Right ventricle myocardium superior (tissue), 1 donor: ENCODE measurements at regions of chr4 and their contacts with region 1.

Region 1: DNA sequence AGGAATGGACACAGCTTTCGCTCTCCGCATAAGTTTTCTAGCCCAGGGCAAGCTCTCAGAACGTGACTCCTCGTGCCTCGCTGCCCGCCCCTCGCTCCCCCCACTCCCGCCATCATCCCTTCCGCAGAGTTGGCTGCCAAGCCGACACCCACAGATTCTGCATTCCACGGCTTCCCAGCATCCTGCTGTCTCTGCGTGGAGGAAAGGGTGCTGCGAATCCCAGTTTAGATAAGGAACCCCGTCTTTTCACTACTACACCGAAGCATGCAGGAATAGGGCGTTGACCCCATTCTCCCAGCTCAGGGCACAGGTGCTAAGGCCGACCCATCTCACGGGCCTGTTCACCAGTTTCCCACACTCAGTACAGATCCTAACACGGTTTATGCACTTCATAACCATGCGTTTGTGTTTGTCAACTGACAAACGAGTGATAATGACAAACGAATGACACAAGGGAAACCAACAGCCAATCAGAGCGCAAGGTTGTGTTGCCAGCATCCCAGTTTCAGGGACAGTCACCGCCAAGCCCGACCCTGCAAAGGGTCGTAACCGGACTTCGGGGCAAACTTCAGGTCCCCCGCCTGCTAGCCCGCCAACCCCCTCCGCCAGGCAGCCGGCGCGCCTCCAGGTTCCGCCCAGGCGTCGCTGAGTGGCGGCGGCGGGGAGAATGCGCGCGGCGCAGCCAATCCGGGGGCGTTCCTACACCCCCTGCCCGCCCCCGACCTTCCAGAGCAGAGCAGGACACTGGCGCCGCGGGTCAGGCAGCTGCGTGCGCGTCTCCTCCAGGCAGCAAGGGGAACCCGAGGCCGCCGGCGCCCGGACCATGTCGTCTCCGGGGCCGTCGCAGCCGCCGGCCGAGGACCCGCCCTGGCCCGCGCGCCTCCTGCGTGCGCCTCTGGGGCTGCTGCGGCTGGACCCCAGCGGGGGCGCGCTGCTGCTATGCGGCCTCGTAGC is at the start of gene CYP2U1:
- DNase-seq: peak; percentile 94
- ATAC-seq: peak; percentile 99
- total RNA-seq, gene CYP2U1: 6.5 TPM

Region 2: GRCh38 chr4:107548211-107548905 is 382.7 kb before region 1 on chr4:
- intact Hi-C with region 1: no loop called
- DNase-seq: no peak
- ATAC-seq: no peak

Region 3: DNA sequence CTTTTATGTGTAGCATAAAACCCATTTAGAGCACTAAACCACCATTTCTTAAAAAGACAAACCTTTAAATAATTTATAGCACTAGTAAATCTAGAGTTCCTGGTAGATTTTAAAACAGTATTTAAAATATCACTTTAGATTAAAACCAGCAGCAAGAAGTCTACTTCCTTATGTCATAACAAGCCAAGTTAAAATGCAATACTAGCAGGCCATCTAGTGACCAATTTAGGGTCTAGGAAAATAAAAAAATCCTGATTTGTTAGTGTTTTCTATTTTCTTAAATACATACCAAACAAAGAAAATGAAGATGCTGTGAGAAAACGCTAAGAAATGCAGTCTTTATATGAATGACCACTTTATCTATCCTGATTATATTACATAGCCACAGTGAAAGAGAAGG is 265.0 kb before region 1 on chr4:
- intact Hi-C with region 1: no loop called
- DNase-seq: no peak
- ATAC-seq: peak; percentile 51

Region 4: DNA sequence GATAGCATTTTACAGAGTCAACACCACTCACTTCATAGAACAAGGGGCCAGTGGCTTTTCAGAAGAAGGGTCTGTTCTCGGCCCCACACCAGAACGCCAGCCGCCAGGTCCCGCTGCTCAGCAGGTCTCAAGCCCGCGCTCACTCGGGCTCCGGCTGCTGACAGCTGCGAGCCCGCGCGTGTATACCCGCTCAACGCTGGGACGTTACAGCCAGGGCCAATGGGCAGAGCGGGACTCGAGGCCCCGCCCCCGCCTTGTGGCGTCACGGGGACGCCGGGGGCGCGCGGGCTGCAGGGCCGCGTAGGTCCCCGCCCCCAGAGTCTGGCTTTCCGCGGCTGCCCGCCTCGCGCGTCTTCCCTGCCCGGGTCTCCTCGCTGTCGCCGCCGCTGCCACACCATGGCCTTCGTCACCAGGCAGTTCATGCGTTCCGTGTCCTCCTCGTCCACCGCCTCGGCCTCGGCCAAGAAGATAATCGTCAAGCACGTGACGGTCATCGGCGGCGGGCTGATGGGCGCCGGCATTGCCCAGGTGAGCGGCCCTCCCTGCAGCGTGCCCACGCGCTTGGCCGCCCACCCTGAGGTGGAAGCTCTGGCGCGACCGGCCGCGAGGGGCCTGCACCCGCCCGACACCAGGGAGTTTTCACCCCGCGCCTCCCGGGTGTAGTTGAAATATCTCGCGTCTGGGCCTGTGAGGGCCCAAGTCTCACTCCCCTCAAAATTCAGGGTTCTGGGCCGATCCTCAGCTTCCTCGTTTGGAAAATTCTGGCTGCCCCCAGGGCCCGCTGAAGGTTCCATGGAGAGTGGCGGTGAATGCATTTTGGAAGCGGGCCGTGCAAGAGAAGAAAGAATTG is 58.7 kb after region 1 on chr4 and contains the start of gene HADH:
- intact Hi-C with region 1: loop called (anchors 10 kb)
- DNase-seq: peak; percentile 97
- ATAC-seq: peak; percentile 98
- total RNA-seq, gene HADH: 249 TPM